A549 (cell line): ENCODE measurements at regions of chr6 and their contacts with region 1.

Region 1: GRCh38 chr6:166989427-166990032 is 9.7 kb upstream of the CEP43 start:
- DNase-seq: peak in 1 of 2 experiments; percentile 23
- ATAC-seq: peak; percentile 34 to 66; a peak in 3 of 6 replicates
- H3K4me3 ChIP-seq: no peak overlapping the region
- H3K27ac ChIP-seq: no peak overlapping the region
- H3K4me1 ChIP-seq: peaks cover 4% of the 10 kb centered on the region; the same call in 1 of the 3 replicates
- CTCF ChIP-seq: peak; percentile 49
- EP300 ChIP-seq: no peak
- POLR2A ChIP-seq: no peak
- RAD21 ChIP-seq: peak; percentile 42 to 44; a peak in 3 of 5 replicates

Region 2: GRCh38 chr6:166969390-166970002 is 20.0 kb before region 1 on chr6:
- CTCF ChIA-PET with region 1: interaction called, 13 read pairs
- POLR2A ChIA-PET with region 1: no interaction called
- DNase-seq: no peak
- ATAC-seq: no peak
- H3K4me3 ChIP-seq: no peak overlapping the region
- H3K27ac ChIP-seq: no peak overlapping the region
- H3K4me1 ChIP-seq: no peaks in the 10 kb centered on the region
- CTCF ChIP-seq: no peak
- EP300 ChIP-seq: no peak
- POLR2A ChIP-seq: no peak
- RAD21 ChIP-seq: no peak

Region 3: GRCh38 chr6:167113935-167114910 is 124.7 kb after region 1 on chr6:
- CTCF ChIA-PET with region 1: no interaction called
- POLR2A ChIA-PET with region 1: no interaction called
- DNase-seq: no peak
- ATAC-seq: no peak
- H3K4me3 ChIP-seq: no peak overlapping the region
- H3K27ac ChIP-seq: no peak overlapping the region
- H3K4me1 ChIP-seq: no peaks in the 10 kb centered on the region
- CTCF ChIP-seq: no peak
- EP300 ChIP-seq: no peak
- POLR2A ChIP-seq: no peak
- RAD21 ChIP-seq: no peak